ENCODE measurements at regions of chr15 and their contacts with region 1.

Region 1: GRCh38 chr15:83248151-83249029 is 36.1 kb downstream of the BNC1 start:
- DNase-seq: peak; percentile 78
- H3K4me3 ChIP-seq: no peak overlapping the region
- H3K27ac ChIP-seq: no peak overlapping the region
- H3K4me1 ChIP-seq: no peaks in the 10 kb centered on the region
- H3K27me3 ChIP-seq: peaks cover 10 to 16% of the 10 kb centered on the region in 2 experiments
- CTCF ChIP-seq: peak; percentile 54 to 66
- POLR2A ChIP-seq: no peak

Region 2: DNA sequence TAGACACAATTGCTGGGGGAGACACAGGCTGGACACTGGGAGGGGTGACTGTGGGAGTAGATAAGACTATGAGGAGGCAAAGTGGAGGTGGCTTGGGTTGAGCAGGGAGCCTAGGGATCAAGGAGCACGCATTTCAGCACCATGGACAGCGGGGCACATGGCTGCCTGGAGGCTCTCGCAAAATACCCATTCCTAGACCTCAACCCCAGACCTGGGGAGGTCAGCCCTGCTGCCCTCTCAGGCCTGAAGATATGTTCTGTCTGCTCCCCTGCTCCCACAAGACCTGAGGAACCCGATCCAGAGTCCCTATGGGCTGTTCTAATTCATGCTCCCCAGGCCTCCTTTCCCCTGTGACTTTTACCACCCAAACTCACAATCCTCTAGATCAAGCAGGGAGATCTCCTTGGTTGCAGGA is 585.2 kb before region 1 on chr15:
- CTCF ChIA-PET with region 1: no interaction called
- POLR2A ChIA-PET with region 1: no interaction called
- dilution Hi-C with region 1: no loop called
- intact Hi-C with region 1: no loop called
- DNase-seq: peak; percentile 17
- H3K4me3 ChIP-seq: no peak overlapping the region
- H3K27ac ChIP-seq: no peak overlapping the region
- H3K4me1 ChIP-seq: no peaks in the 10 kb centered on the region
- H3K27me3 ChIP-seq: no peaks in the 10 kb centered on the region
- CTCF ChIP-seq: no peak
- POLR2A ChIP-seq: no peak

Region 3: GRCh38 chr15:83011271-83012075 is 236.9 kb before region 1 on chr15 and contains the start of gene C15orf40:
- CTCF ChIA-PET with region 1: interaction called, 13 read pairs
- POLR2A ChIA-PET with region 1: no interaction called
- dilution Hi-C with region 1: no loop called
- intact Hi-C with region 1: no loop called
- DNase-seq: peak; percentile 89
- H3K4me3 ChIP-seq: peak within 1 kb of the TSS; percentile 74 to 100 (median 87)
- H3K27ac ChIP-seq: peak within 1 kb of the TSS; percentile 64
- H3K4me1 ChIP-seq: peaks cover 17% of the 10 kb centered on the region
- H3K27me3 ChIP-seq: no peaks in the 10 kb centered on the region
- CTCF ChIP-seq: peak; percentile 57 to 75
- POLR2A ChIP-seq: peak; percentile 92
- total RNA-seq, gene C15orf40: 20.9 and 27.9 TPM in 2 replicates

Region 4: GRCh38 chr15:83270176-83270575 is 21.8 kb after region 1 on chr15:
- CTCF ChIA-PET with region 1: interaction called, 10 read pairs
- POLR2A ChIA-PET with region 1: no interaction called
- dilution Hi-C with region 1: no loop called
- intact Hi-C with region 1: no loop called
- DNase-seq: no peak
- H3K4me3 ChIP-seq: no peak overlapping the region
- H3K27ac ChIP-seq: no peak overlapping the region
- H3K4me1 ChIP-seq: no peaks in the 10 kb centered on the region
- H3K27me3 ChIP-seq: no peaks in the 10 kb centered on the region
- CTCF ChIP-seq: no peak
- POLR2A ChIP-seq: no peak

Region 5: GRCh38 chr15:83365370-83365938 is 117.1 kb after region 1 on chr15:
- CTCF ChIA-PET with region 1: interaction called, 11 read pairs
- POLR2A ChIA-PET with region 1: no interaction called
- dilution Hi-C with region 1: no loop called
- intact Hi-C with region 1: no loop called
- DNase-seq: peak; percentile 8
- H3K4me3 ChIP-seq: no peak overlapping the region
- H3K27ac ChIP-seq: no peak overlapping the region
- H3K4me1 ChIP-seq: peaks cover 5% of the 10 kb centered on the region
- H3K27me3 ChIP-seq: peaks cover 24 to 32% of the 10 kb centered on the region in 2 experiments
- CTCF ChIP-seq: no peak
- POLR2A ChIP-seq: no peak

Region 6: DNA sequence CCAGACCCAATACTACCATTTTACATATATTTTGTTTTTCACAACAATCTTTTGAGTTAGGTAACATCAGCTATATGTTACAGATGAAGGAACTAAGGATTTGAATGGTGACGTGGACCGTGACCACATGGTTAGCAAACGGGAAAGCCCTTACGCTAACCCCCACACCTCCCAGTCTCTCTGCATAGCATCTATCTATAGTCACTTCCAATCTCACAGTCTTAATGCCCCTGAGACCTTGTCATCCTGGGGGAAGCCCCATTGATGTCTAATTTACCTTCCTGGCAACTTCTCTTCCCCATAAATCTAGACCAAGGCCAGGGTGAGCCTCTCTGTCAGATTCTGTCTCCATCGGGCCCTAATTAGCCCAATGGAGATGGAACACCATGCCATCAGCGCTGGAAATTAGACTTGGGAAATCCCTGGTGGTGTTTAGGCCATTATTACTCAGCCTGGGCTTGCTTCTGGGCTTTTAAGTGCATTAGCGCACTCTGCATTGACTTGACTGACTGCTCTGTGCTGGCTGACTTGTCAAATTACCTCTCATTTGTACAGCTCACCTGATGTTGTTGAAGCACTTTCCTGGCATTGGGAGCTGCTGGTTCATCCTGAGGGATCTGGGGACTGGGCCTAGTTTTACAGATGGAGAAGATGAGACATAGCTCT is 164.8 kb after region 1 on chr15:
- CTCF ChIA-PET with region 1: interaction called, 11 read pairs
- POLR2A ChIA-PET with region 1: no interaction called
- dilution Hi-C with region 1: no loop called
- intact Hi-C with region 1: no loop called
- DNase-seq: no peak
- H3K4me3 ChIP-seq: no peak overlapping the region
- H3K27ac ChIP-seq: no peak overlapping the region
- H3K4me1 ChIP-seq: no peaks in the 10 kb centered on the region
- H3K27me3 ChIP-seq: no peaks in the 10 kb centered on the region
- CTCF ChIP-seq: no peak
- POLR2A ChIP-seq: no peak

Region 7: DNA sequence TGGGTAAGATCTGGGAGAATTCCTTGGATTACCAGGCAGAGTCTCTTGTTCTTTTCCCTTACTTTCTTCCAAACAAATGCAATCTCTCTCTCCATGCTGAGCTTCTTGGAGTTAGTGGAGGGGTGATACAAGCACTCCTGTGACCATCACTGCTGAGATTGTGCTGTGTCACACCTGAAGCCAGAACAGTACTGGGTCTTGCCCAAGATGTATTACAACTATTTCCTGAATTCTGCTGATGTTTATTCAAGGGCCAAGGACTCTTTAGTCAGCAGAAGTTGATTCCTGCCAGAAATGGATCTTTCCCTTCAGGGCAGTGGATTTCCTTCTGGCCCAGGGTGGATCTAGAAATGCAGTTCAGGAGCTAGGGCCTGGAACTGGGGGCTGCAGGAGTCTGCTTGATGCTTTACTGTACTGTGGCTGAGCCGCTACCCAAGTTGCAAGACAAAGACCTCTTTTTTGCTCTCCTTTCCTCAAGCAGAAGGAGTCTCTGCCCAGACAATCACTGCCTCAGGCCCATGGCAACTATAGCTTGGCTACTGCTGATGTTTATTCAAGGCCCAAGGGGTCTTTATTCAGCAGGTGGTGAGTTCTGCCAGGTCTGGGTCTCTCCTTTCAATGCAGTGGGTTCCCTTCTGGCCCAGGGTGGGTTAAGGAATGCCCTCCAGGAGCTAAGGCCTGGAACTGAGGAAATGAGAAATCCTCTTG is 297.6 kb after region 1 on chr15:
- CTCF ChIA-PET with region 1: no interaction called
- POLR2A ChIA-PET with region 1: no interaction called
- dilution Hi-C with region 1: no loop called
- intact Hi-C with region 1: no loop called
- DNase-seq: no peak
- H3K4me3 ChIP-seq: no peak overlapping the region
- H3K27ac ChIP-seq: no peak overlapping the region
- H3K4me1 ChIP-seq: no peaks in the 10 kb centered on the region
- H3K27me3 ChIP-seq: no peaks in the 10 kb centered on the region
- CTCF ChIP-seq: no peak
- POLR2A ChIP-seq: no peak

Region 8: GRCh38 chr15:83559310-83559966 is 311.0 kb after region 1 on chr15:
- CTCF ChIA-PET with region 1: interaction called, 94 read pairs
- POLR2A ChIA-PET with region 1: no interaction called
- dilution Hi-C with region 1: no loop called
- intact Hi-C with region 1: loop called (anchors 1 kb)
- DNase-seq: peak; percentile 61
- H3K4me3 ChIP-seq: no peak overlapping the region
- H3K27ac ChIP-seq: no peak overlapping the region
- H3K4me1 ChIP-seq: no peaks in the 10 kb centered on the region
- H3K27me3 ChIP-seq: no peaks in the 10 kb centered on the region
- CTCF ChIP-seq: peak; percentile 70 to 77
- POLR2A ChIP-seq: no peak

Region 9: GRCh38 chr15:83653639-83654378 is 405.4 kb after region 1 on chr15 and contains the start of gene ADAMTSL3:
- CTCF ChIA-PET with region 1: no interaction called
- POLR2A ChIA-PET with region 1: no interaction called
- dilution Hi-C with region 1: no loop called
- intact Hi-C with region 1: no loop called
- DNase-seq: no peak
- H3K4me3 ChIP-seq: no peak within 1 kb of the TSS
- H3K27ac ChIP-seq: no peak within 1 kb of the TSS
- H3K4me1 ChIP-seq: no peaks in the 10 kb centered on the region
- H3K27me3 ChIP-seq: peaks cover 19 to 20% of the 10 kb centered on the region in 2 experiments
- CTCF ChIP-seq: no peak
- POLR2A ChIP-seq: no peak
- total RNA-seq, gene ADAMTSL3: not detected in 2 replicates